Breast epithelium (tissue), 4 donors: ENCODE measurements at regions of chr11 and their contacts with region 1.

Region 1: DNA sequence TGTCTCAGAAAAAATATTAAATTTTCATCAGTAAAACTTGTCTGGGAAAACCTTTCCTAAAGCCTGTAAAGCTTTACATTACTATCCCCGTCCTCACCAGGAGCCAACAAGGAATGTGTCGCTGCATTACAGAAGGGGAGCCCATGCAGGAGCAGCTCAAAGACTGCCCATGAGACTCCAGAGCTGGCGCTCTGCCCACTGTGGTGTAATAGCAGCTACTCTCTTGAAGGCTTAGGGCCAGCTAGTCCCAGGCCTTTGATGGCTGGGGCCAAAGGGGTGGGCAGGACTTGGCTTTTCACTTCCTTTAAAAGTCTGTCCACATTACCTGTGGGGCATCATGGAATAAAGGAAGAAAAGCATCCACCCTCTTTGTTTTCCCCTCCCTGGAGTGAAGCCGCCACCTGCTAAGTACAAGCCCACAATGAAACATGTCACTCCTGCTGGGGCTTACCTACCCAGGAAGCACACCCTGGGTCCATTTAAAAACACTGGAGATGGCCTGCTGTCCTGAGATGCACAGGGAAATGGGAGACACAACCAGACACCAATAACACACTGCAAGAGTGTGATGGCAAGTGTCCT is 150.7 kb downstream of the ADAMTS15 start:
- DNase-seq: peak in 1 of 2 donors; percentile 64
- H3K4me3 ChIP-seq: no peak overlapping the region
- H3K27ac ChIP-seq: no peak overlapping the region
- H3K4me1 ChIP-seq: no peaks in the 10 kb centered on the region
- H3K27me3 ChIP-seq: no peaks in the 10 kb centered on the region
- CTCF ChIP-seq: no peak
- POLR2A ChIP-seq: no peak

Region 2: GRCh38 chr11:129840236-129840635 is 758.9 kb before region 1 on chr11:
- intact Hi-C with region 1: no loop called
- DNase-seq: no peak
- H3K4me3 ChIP-seq: no peak overlapping the region
- H3K27ac ChIP-seq: no peak overlapping the region
- H3K4me1 ChIP-seq: no peaks in the 10 kb centered on the region
- H3K27me3 ChIP-seq: no peaks in the 10 kb centered on the region
- CTCF ChIP-seq: no peak
- POLR2A ChIP-seq: no peak

Region 3: GRCh38 chr11:130533211-130533797 is 65.9 kb before region 1 on chr11:
- intact Hi-C with region 1: loop called (anchors 2 kb)
- DNase-seq: peak in 1 of 2 donors; percentile 69
- H3K4me3 ChIP-seq: no peak overlapping the region
- H3K27ac ChIP-seq: peak overlapping the region; percentile 51 to 61
- H3K4me1 ChIP-seq: no peaks in the 10 kb centered on the region
- H3K27me3 ChIP-seq: no peaks in the 10 kb centered on the region
- CTCF ChIP-seq: no peak
- POLR2A ChIP-seq: no peak